A549 (cell line): ENCODE measurements at regions of chr9 and their contacts with region 1.

Region 1: GRCh38 chr9:74773886-74774479 is 113.7 kb downstream of the TRPM6 start:
- DNase-seq: peak; percentile 65 to 81
- ATAC-seq: peak; percentile 37 to 66; a peak in 4 of 6 replicates
- H3K4me3 ChIP-seq: no peak overlapping the region
- H3K27ac ChIP-seq: no peak overlapping the region
- H3K4me1 ChIP-seq: no peaks in the 10 kb centered on the region
- CTCF ChIP-seq: peak; percentile 94
- EP300 ChIP-seq: no peak
- POLR2A ChIP-seq: no peak
- RAD21 ChIP-seq: peak; percentile 91 to 94

Region 2: GRCh38 chr9:74556685-74557084 is 217.3 kb before region 1 on chr9:
- CTCF ChIA-PET with region 1: no interaction called
- POLR2A ChIA-PET with region 1: no interaction called
- DNase-seq: no peak
- ATAC-seq: no peak
- H3K4me3 ChIP-seq: no peak overlapping the region
- H3K27ac ChIP-seq: no peak overlapping the region
- H3K4me1 ChIP-seq: no peaks in the 10 kb centered on the region
- CTCF ChIP-seq: no peak
- EP300 ChIP-seq: no peak
- POLR2A ChIP-seq: no peak
- RAD21 ChIP-seq: no peak

Region 3: DNA sequence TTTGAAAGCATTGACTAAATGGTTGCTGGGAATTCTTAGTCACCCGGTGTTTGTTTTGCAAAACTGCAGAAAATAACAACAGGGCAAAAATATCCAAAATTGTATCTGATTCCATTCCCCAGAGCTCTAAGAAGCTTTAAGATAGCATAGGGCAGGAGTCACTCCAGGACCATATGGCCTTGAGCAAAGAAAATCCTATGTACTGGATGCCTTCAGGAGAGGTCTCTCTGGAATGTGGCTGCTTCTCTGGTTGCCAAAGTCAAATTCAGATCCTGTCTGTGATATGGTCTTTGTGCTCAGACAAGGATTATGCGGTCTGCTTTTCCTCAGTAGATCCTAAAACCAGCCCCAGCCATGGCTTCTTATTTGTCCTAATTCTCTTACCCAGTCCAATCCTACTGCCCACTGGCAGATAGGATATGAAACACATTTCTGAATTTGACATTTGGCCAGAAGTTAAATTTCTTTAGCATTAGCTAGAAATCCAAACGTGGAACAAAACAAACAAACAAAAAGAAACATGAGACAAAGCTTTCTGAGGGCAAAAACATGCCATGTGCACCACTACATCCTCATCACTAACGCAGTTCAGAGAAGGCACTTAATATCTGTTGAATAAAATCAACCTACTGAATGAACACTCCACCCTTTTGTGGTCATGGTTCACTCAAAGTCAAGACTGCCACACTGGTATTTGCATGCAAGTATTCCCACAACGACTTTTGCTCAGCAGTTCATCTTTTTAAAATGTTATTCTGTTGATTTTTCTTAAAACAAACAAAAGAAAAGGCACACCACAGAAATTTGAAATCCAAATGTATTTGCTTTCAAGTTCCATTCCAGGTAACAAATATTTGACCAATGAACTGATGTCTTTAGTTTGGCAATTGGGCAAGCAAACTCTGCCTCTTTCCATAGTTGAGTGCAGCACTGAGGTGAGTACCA is 52.0 kb before region 1 on chr9:
- CTCF ChIA-PET with region 1: no interaction called
- POLR2A ChIA-PET with region 1: no interaction called
- DNase-seq: no peak
- ATAC-seq: peak in 1 of 2 experiments; percentile 37; a peak in 1 of 6 replicates
- H3K4me3 ChIP-seq: no peak overlapping the region
- H3K27ac ChIP-seq: no peak overlapping the region
- H3K4me1 ChIP-seq: no peaks in the 10 kb centered on the region
- CTCF ChIP-seq: no peak
- EP300 ChIP-seq: no peak
- POLR2A ChIP-seq: no peak
- RAD21 ChIP-seq: no peak

Region 4: GRCh38 chr9:74755355-74755754 is 18.6 kb before region 1 on chr9:
- CTCF ChIA-PET with region 1: interaction called, 19 read pairs
- POLR2A ChIA-PET with region 1: no interaction called
- DNase-seq: no peak
- ATAC-seq: no peak
- H3K4me3 ChIP-seq: no peak overlapping the region
- H3K27ac ChIP-seq: no peak overlapping the region
- H3K4me1 ChIP-seq: peaks cover 9% of the 10 kb centered on the region
- CTCF ChIP-seq: no peak
- EP300 ChIP-seq: no peak
- POLR2A ChIP-seq: no peak
- RAD21 ChIP-seq: no peak

Region 5: DNA sequence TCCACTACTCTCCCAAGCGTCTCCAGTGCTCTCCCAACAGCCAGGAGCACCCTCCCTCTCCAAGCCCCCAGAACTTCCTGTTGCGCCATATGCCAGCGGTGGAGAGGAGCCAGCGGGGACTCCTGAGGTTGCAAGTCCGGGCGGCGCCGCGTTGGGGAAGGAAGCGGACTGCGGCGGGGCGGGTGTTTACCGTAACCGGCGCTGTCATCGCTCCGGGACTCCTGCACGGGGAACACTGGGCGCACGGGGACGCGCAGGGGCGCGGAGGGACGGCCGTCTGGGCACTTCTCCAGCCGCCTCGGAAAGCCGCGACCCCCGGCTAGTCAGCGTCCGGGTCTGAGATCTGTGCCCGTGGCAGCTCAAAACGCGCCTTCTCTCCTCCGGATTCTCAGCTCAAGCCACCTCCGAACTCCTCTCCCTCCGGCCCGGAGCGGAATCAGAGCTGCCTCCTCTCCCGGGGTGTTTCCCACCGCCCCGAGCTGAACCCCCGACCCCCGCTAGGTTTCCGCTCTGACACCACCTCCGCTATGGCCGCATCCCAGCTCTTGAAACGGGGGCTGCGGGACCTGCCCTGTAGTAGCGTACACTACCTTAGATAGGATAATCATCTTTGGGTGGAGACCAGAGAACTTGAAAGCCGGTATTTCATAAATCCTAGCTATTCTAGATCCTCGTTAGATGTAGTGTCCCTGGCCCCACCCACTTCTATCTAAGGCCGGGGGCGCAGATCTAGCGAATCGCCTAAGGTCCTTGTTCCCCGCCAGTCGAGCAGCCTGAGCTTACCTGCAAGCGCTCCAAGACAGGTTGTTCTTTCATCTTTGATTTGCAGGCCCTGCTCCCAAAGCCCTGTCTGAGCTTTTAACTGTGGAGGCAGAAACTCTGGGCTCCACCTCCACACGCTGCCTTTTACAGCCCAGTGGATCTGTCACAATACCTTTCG is 113.3 kb after region 1 on chr9 and contains the start of gene TRPM6:
- CTCF ChIA-PET with region 1: interaction called, 32 read pairs
- POLR2A ChIA-PET with region 1: interaction called, 3 read pairs
- DNase-seq: peak; percentile 35 to 77
- ATAC-seq: peak; percentile 91 to 94
- H3K4me3 ChIP-seq: peak within 1 kb of the TSS; percentile 53
- H3K27ac ChIP-seq: peak within 1 kb of the TSS; percentile 69 to 88
- H3K4me1 ChIP-seq: 0 out of 3 replicates have a peak, but pooled peaks cover 6% of the 10 kb centered on the region
- CTCF ChIP-seq: no peak
- EP300 ChIP-seq: no peak
- POLR2A ChIP-seq: 0 out of 2 replicates have a peak, but pooled peaks have one; percentile 6
- RAD21 ChIP-seq: no peak
- polyA plus RNA-seq, gene TRPM6: 2.1 and 2.2 TPM in 2 replicates

Region 6: DNA sequence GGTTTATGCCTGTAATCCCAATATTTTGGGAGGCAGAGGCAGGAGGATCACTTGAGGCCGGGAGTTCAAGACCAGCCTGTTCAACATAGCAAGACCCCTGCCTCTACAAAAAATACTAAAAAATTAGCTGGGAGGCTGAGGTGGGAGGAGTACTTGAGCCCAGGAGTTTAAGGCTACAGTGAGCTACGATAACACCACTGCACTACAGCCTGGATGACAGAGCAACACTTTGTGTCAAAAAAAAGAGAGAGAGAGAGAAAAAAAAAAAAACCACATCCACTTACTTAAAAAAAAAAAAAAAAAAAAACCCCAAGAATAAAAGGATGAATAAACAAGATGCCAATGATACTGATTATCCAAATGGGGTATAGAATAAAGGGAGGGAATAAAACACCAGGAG is 239.8 kb after region 1 on chr9:
- CTCF ChIA-PET with region 1: interaction called, 304 read pairs
- POLR2A ChIA-PET with region 1: no interaction called
- DNase-seq: no peak
- ATAC-seq: no peak
- H3K4me3 ChIP-seq: no peak overlapping the region
- H3K27ac ChIP-seq: no peak overlapping the region
- H3K4me1 ChIP-seq: no peaks in the 10 kb centered on the region
- CTCF ChIP-seq: no peak
- EP300 ChIP-seq: no peak
- POLR2A ChIP-seq: no peak
- RAD21 ChIP-seq: no peak

Region 7: GRCh38 chr9:75071530-75072124 is 297.6 kb after region 1 on chr9:
- CTCF ChIA-PET with region 1: interaction called, 278 read pairs
- POLR2A ChIA-PET with region 1: no interaction called
- DNase-seq: no peak
- ATAC-seq: no peak
- H3K4me3 ChIP-seq: no peak overlapping the region
- H3K27ac ChIP-seq: no peak overlapping the region
- H3K4me1 ChIP-seq: no peaks in the 10 kb centered on the region
- CTCF ChIP-seq: no peak
- EP300 ChIP-seq: no peak
- POLR2A ChIP-seq: no peak
- RAD21 ChIP-seq: no peak